T-cell (primary cell): ENCODE measurements at regions of chr10 and their contacts with region 1.

Region 1: GRCh38 chr10:100743626-100744135 is 1.7 kb upstream of the PAX2 start:
- DNase-seq: peak in 29 of 35 experiments; percentile 13 to 80 (median 28)
- ATAC-seq: peak in 3 of 4 experiments; percentile 57 to 71 (median 68)
- H3K4me3 ChIP-seq: no peak overlapping the region
- H3K4me3 Mint-ChIP-seq: peak overlapping the region in 1 of 3 donors; percentile 39
- H3K27ac ChIP-seq: no peak overlapping the region
- H3K27ac Mint-ChIP-seq: peak overlapping the region in 1 of 2 donors; percentile 6
- H3K4me1 ChIP-seq: peaks cover 2 to 47% of the 10 kb centered on the region in 2 experiments
- H3K4me1 Mint-ChIP-seq: peaks cover 30 to 54% (median 47%) of the 10 kb centered on the region in 3 donors
- H3K27me3 ChIP-seq: peaks cover 14 to 95% of the 10 kb centered on the region in 2 experiments
- H3K27me3 Mint-ChIP-seq: peaks cover 64 to 83% of the 10 kb centered on the region in 2 donors

Region 2: GRCh38 chr10:100562008-100562711 is 181.5 kb before region 1 on chr10:
- CTCF ChIA-PET with region 1: interaction called, 4 to 10 read pairs
- POLR2A ChIA-PET with region 1: no interaction called
- DNase-seq: peak; percentile 56 to 89 (median 76)
- ATAC-seq: peak; percentile 92 to 99 (median 94)
- H3K4me3 ChIP-seq: peak overlapping the region; percentile 30 to 40
- H3K4me3 Mint-ChIP-seq: peak overlapping the region in 2 of 3 donors; percentile 21 to 65
- H3K27ac ChIP-seq: no peak overlapping the region
- H3K27ac Mint-ChIP-seq: no peak overlapping the region
- H3K4me1 ChIP-seq: peaks cover 3 to 17% of the 10 kb centered on the region in 2 experiments
- H3K4me1 Mint-ChIP-seq: peaks cover 10 to 19% (median 13%) of the 10 kb centered on the region in 3 donors
- H3K27me3 ChIP-seq: peaks cover 2 to 50% of the 10 kb centered on the region in 2 experiments
- H3K27me3 Mint-ChIP-seq: peaks cover 15 to 37% of the 10 kb centered on the region in 2 donors

Region 3: GRCh38 chr10:100710151-100710871 is 33.4 kb before region 1 on chr10:
- CTCF ChIA-PET with region 1: no interaction called
- POLR2A ChIA-PET with region 1: no interaction called
- DNase-seq: no peak
- ATAC-seq: no peak
- H3K4me3 ChIP-seq: no peak overlapping the region
- H3K4me3 Mint-ChIP-seq: no peak overlapping the region
- H3K27ac ChIP-seq: no peak overlapping the region
- H3K27ac Mint-ChIP-seq: no peak overlapping the region
- H3K4me1 ChIP-seq: peaks cover 0 to 1% of the 10 kb centered on the region in 2 experiments
- H3K4me1 Mint-ChIP-seq: peaks cover 8 to 11% (median 9%) of the 10 kb centered on the region in 3 donors
- H3K27me3 ChIP-seq: peaks cover 16 to 78% of the 10 kb centered on the region in 2 experiments
- H3K27me3 Mint-ChIP-seq: peaks cover 79% of the 10 kb centered on the region in 2 donors